Endothelial cell of umbilical vein (primary cell): ENCODE measurements at regions of chr6 and their contacts with region 1.

Region 1: GRCh38 chr6:168132531-168133167 is 53.6 kb upstream of the FRMD1 start:
- DNase-seq: peak; percentile 25
- H3K4me3 ChIP-seq: no peak overlapping the region
- H3K27ac ChIP-seq: no peak overlapping the region
- H3K4me1 ChIP-seq: no peaks in the 10 kb centered on the region
- H3K27me3 ChIP-seq: no peaks in the 10 kb centered on the region
- CTCF ChIP-seq: peak; percentile 16 to 42
- POLR2A ChIP-seq: no peak

Region 2: DNA sequence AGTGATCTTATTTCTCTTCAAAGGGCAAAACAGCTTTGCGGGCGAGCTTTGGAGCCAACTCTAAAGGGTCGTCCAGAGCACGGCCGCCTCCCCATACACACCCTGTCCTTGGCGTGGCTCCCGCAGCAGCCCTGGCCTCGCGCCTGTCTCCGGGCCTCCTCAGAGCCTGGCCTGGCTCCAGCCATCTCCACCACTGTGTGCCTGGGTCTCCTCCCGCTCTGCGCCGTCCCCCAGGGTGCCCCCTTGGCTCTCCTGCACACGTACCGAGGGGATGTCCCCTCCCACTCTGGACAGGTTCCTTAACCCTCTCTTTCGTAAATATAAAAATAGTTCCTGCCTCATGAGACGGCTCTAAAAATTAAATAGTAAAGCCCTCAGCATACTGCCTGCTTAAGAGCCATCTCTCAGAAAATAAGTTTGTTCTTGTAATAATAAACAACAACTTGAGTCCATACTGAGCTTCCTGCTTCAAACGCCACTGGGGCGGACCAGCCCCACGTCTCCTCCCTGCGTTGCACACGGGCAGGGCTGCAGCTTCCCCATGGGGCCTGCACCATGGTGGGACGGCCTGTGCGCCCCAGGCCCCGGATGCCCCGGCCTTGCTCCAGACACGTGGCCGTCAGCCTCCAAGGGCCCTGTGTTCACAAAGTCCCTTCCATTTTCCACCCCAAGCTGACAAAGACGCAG is 581.6 kb before region 1 on chr6:
- CTCF ChIA-PET with region 1: no interaction called
- POLR2A ChIA-PET with region 1: no interaction called
- dilution Hi-C with region 1: no loop called
- intact Hi-C with region 1: no loop called
- DNase-seq: peak; percentile 23
- H3K4me3 ChIP-seq: no peak overlapping the region
- H3K27ac ChIP-seq: no peak overlapping the region
- H3K4me1 ChIP-seq: peaks cover 4% of the 10 kb centered on the region
- H3K27me3 ChIP-seq: no peaks in the 10 kb centered on the region
- CTCF ChIP-seq: no peak
- POLR2A ChIP-seq: no peak

Region 3: DNA sequence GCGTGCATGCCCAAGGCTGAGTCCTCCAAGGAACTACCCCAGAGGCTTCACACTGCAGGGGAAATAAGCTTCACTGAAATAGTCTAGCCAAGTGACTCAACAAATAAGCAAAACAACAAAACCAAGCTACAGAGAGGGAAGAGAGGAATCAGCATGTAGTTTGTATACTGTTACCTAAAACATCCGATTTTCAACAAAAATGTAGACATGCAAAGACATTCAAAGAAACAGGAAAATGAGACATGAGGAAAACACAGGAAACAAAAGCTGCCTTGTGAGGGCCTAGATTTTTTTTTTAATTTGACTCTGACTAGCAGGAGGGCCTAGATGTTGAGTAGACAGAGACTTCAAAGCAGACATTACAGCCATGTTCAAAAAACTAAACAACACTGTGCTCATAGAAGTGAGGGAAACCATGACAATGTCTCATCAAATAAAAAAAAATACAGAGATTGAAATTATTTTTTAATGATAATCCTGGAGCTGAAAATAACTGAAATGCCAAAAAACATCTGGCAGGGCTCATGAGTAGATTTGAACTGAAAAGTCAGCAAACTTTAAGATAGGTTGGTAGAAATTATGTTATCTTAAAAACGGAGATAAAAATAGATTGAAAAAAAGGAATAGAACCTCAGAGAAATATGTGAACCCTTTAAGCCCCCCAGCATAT is 151.6 kb before region 1 on chr6:
- CTCF ChIA-PET with region 1: no interaction called
- POLR2A ChIA-PET with region 1: no interaction called
- dilution Hi-C with region 1: no loop called
- intact Hi-C with region 1: loop called (anchors 5 kb)
- DNase-seq: peak; percentile 27
- H3K4me3 ChIP-seq: no peak overlapping the region
- H3K27ac ChIP-seq: peak overlapping the region; percentile 5
- H3K4me1 ChIP-seq: peaks cover 4% of the 10 kb centered on the region
- H3K27me3 ChIP-seq: no peaks in the 10 kb centered on the region
- CTCF ChIP-seq: no peak
- POLR2A ChIP-seq: no peak

Region 4: GRCh38 chr6:168050881-168051586 is 81.6 kb before region 1 on chr6:
- CTCF ChIA-PET with region 1: no interaction called
- POLR2A ChIA-PET with region 1: no interaction called
- dilution Hi-C with region 1: no loop called
- intact Hi-C with region 1: loop called (anchors 5 kb)
- DNase-seq: no peak
- H3K4me3 ChIP-seq: no peak overlapping the region
- H3K27ac ChIP-seq: no peak overlapping the region
- H3K4me1 ChIP-seq: no peaks in the 10 kb centered on the region
- H3K27me3 ChIP-seq: no peaks in the 10 kb centered on the region
- CTCF ChIP-seq: peak; percentile 21 to 41
- POLR2A ChIP-seq: no peak

Region 5: GRCh38 chr6:168171673-168172353 is 39.2 kb after region 1 on chr6:
- CTCF ChIA-PET with region 1: no interaction called
- POLR2A ChIA-PET with region 1: no interaction called
- dilution Hi-C with region 1: no loop called
- intact Hi-C with region 1: no loop called
- DNase-seq: no peak
- H3K4me3 ChIP-seq: no peak overlapping the region
- H3K27ac ChIP-seq: no peak overlapping the region
- H3K4me1 ChIP-seq: no peaks in the 10 kb centered on the region
- H3K27me3 ChIP-seq: no peaks in the 10 kb centered on the region
- CTCF ChIP-seq: no peak
- POLR2A ChIP-seq: no peak

Region 6: GRCh38 chr6:168201383-168201782 is 68.7 kb after region 1 on chr6:
- CTCF ChIA-PET with region 1: no interaction called
- POLR2A ChIA-PET with region 1: no interaction called
- dilution Hi-C with region 1: no loop called
- intact Hi-C with region 1: no loop called
- DNase-seq: no peak
- H3K4me3 ChIP-seq: no peak overlapping the region
- H3K27ac ChIP-seq: no peak overlapping the region
- H3K4me1 ChIP-seq: no peaks in the 10 kb centered on the region
- H3K27me3 ChIP-seq: no peaks in the 10 kb centered on the region
- CTCF ChIP-seq: no peak
- POLR2A ChIP-seq: no peak

Region 7: DNA sequence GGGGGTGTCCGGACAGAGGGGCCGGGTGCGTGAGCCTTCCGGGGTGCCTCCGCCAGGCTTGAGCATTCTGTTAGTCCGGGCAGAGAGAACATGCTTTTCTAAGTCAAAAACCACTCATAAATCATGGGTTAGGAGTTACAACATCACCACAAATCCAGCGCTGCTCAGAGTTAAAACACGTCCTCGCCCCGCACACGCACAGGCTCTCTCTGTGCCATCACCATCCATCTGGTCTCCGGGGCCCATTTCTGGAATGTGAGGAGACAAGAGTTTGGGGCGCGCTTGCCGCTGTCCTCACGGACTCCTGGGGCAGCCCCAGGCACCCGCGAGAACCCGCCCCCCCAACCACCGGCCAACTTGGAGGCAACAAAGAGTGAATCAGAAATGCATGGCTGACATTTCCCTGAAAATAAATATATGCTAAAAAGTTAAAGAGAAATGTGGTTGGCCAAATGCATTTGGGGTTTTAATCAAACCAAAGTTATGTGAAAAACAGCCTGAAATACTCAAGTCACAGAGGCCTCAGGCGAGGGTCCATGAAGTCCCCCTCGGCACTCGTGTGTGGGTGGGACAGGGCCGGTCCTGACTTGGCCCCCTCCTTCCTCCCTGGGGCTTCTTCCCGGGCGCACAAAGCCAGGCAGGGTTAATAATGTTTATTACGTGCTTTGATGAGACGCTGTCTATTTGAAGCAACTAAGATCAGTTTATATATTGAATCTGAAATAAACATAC is 252.2 kb after region 1 on chr6:
- CTCF ChIA-PET with region 1: no interaction called
- POLR2A ChIA-PET with region 1: no interaction called
- dilution Hi-C with region 1: no loop called
- intact Hi-C with region 1: no loop called
- DNase-seq: no peak
- H3K4me3 ChIP-seq: no peak overlapping the region
- H3K27ac ChIP-seq: no peak overlapping the region
- H3K4me1 ChIP-seq: no peaks in the 10 kb centered on the region
- H3K27me3 ChIP-seq: no peaks in the 10 kb centered on the region
- CTCF ChIP-seq: no peak
- POLR2A ChIP-seq: no peak